ENCODE measurements at regions of chr1 and their contacts with region 1.

Region 1: GRCh38 chr1:30911046-30911954 is 2.7 kb upstream of the SDC3 start:
- DNase-seq: peak; percentile 68
- H3K4me3 ChIP-seq: no peak overlapping the region
- H3K27ac ChIP-seq: no peak overlapping the region
- H3K27me3 ChIP-seq: no peaks in the 10 kb centered on the region
- CTCF ChIP-seq: peak; percentile 87

Region 2: GRCh38 chr1:30718636-30719405 is 192.5 kb before region 1 on chr1:
- CTCF ChIA-PET with region 1: interaction called, 49 read pairs
- POLR2A ChIA-PET with region 1: no interaction called
- DNase-seq: peak; percentile 95
- H3K4me3 ChIP-seq: peak overlapping the region; percentile 66
- H3K27ac ChIP-seq: peak overlapping the region; percentile 99
- H3K27me3 ChIP-seq: no peaks in the 10 kb centered on the region
- CTCF ChIP-seq: peak; percentile 84

Region 3: GRCh38 chr1:30790850-30791778 is 120.2 kb before region 1 on chr1:
- CTCF ChIA-PET with region 1: interaction called, 257 read pairs
- POLR2A ChIA-PET with region 1: no interaction called
- DNase-seq: no peak
- H3K4me3 ChIP-seq: no peak overlapping the region
- H3K27ac ChIP-seq: no peak overlapping the region
- H3K27me3 ChIP-seq: peaks cover 9% of the 10 kb centered on the region
- CTCF ChIP-seq: no peak

Region 4: GRCh38 chr1:30809514-30810263 is 101.6 kb before region 1 on chr1:
- CTCF ChIA-PET with region 1: interaction called, 535 read pairs
- POLR2A ChIA-PET with region 1: interaction called, 5 read pairs
- DNase-seq: peak; percentile 71
- H3K4me3 ChIP-seq: no peak overlapping the region
- H3K27ac ChIP-seq: peak overlapping the region; percentile 94
- H3K27me3 ChIP-seq: no peaks in the 10 kb centered on the region
- CTCF ChIP-seq: no peak